ENCODE measurements at regions of chr3 and their contacts with region 1.

Region 1: GRCh38 chr3:40524568-40525285 is at the start of gene ZNF621:
- DNase-seq: peak; percentile 95 to 98 (median 98)
- ATAC-seq: peak; percentile 99
- H3K4me3 ChIP-seq: peak within 1 kb of the TSS; percentile 87
- H3K27ac ChIP-seq: peak within 1 kb of the TSS; percentile 88
- H3K4me1 ChIP-seq: peaks cover 9 to 12% of the 10 kb centered on the region in 2 experiments; a peak in 4 of 5 replicates
- H3K27me3 ChIP-seq: no peaks in the 10 kb centered on the region
- CTCF ChIP-seq: peak in 1 of 3 experiments; percentile 16; a peak in 2 of 6 replicates
- EP300 ChIP-seq: peak; percentile 5; the same call in 1 of the 2 replicates
- POLR2A ChIP-seq: peak; percentile 98
- RAD21 ChIP-seq: peak in 1 of 2 experiments; percentile 44; a peak in 2 of 4 replicates
- polyA plus RNA-seq, gene ZNF621: 4.7 to 7.3 TPM

Region 2: GRCh38 chr3:40229386-40229785 is 295.3 kb before region 1 on chr3:
- CTCF ChIA-PET with region 1: no interaction called
- POLR2A ChIA-PET with region 1: no interaction called
- in situ Hi-C with region 1: no loop called
- intact Hi-C with region 1: no loop called
- DNase-seq: no peak
- ATAC-seq: no peak
- H3K4me3 ChIP-seq: no peak overlapping the region
- H3K27ac ChIP-seq: no peak overlapping the region
- H3K4me1 ChIP-seq: no peaks in the 10 kb centered on the region; a peak in 2 of 5 replicates
- H3K27me3 ChIP-seq: peaks cover 6 to 30% of the 10 kb centered on the region in 2 experiments; a peak in 2 of 5 replicates
- CTCF ChIP-seq: no peak
- EP300 ChIP-seq: no peak
- POLR2A ChIP-seq: no peak
- RAD21 ChIP-seq: no peak

Region 3: GRCh38 chr3:40505599-40506462 is 18.9 kb before region 1 on chr3 and contains the start of gene ZNF620:
- CTCF ChIA-PET with region 1: no interaction called
- POLR2A ChIA-PET with region 1: interaction called, 12 read pairs
- in situ Hi-C with region 1: no loop called
- intact Hi-C with region 1: no loop called
- DNase-seq: peak; percentile 78 to 86 (median 82)
- ATAC-seq: peak; percentile 96
- H3K4me3 ChIP-seq: peak within 1 kb of the TSS; percentile 52
- H3K27ac ChIP-seq: peak within 1 kb of the TSS; percentile 55
- H3K4me1 ChIP-seq: peaks cover 0 to 7% of the 10 kb centered on the region in 2 experiments; a peak in 3 of 5 replicates
- H3K27me3 ChIP-seq: no peaks in the 10 kb centered on the region
- CTCF ChIP-seq: peak; percentile 63 to 72 (median 64)
- EP300 ChIP-seq: no peak
- POLR2A ChIP-seq: peak; percentile 74
- RAD21 ChIP-seq: peak in 1 of 2 experiments; percentile 53; a peak in 2 of 4 replicates
- polyA plus RNA-seq, gene ZNF620: 1.2 to 3.7 TPM